ENCODE measurements at regions of chr7 and their contacts with region 1.

Region 1: DNA sequence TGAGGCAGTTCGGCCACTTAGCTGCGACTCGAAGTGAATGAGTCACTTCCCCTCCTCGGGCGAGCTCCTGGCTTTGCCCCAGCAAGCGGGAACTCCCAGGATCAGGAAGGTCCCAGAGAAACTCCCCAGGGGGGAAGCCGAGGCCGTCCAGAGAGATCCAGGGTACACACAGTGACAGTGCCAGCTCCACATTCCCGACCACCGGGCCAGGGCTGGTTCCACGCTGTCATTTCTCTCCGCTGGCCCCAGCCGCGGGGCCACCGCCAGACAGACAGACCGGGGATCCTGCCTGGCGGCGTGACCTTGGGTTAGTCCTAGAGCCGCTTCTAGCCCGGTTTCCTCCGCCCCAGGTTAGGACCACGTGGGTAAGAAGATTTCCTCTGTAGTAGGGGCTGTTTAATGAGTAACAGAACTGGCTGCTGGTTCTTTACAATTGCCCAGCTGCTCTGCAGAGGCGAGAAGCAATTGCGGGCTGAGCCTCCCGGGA is 463 bp upstream of the UPP1 start:
- DNase-seq: no peak
- ATAC-seq: no peak
- H3K4me3 ChIP-seq: peak overlapping the region; percentile 53 to 81 (median 73)
- H3K4me3 Mint-ChIP-seq: peak overlapping the region; percentile 94
- H3K27ac ChIP-seq: peak overlapping the region; percentile 56 to 73
- H3K27ac Mint-ChIP-seq: peak overlapping the region; percentile 82
- H3K4me1 ChIP-seq: peaks cover 15 to 40% of the 10 kb centered on the region in 2 donors
- H3K4me1 Mint-ChIP-seq: peaks cover 43% of the 10 kb centered on the region
- H3K27me3 ChIP-seq: no peaks in the 10 kb centered on the region
- H3K27me3 Mint-ChIP-seq: no peaks in the 10 kb centered on the region
- CTCF ChIP-seq: no peak

Region 2: GRCh38 chr7:47254081-47255006 is 834.3 kb before region 1 on chr7:
- CTCF ChIA-PET with region 1: no interaction called
- POLR2A ChIA-PET with region 1: no interaction called
- intact Hi-C with region 1: loop called (anchors 5 kb)
- DNase-seq: peak; percentile 81
- ATAC-seq: peak; percentile 85
- H3K4me3 ChIP-seq: peak overlapping the region; percentile 5 to 65 (median 48)
- H3K4me3 Mint-ChIP-seq: peak overlapping the region; percentile 88
- H3K27ac ChIP-seq: peak overlapping the region in 1 of 2 donors; percentile 45
- H3K27ac Mint-ChIP-seq: peak overlapping the region; percentile 73
- H3K4me1 ChIP-seq: peaks cover 16 to 24% of the 10 kb centered on the region in 2 donors
- H3K4me1 Mint-ChIP-seq: peaks cover 25% of the 10 kb centered on the region
- H3K27me3 ChIP-seq: no peaks in the 10 kb centered on the region
- H3K27me3 Mint-ChIP-seq: peaks cover 5% of the 10 kb centered on the region
- CTCF ChIP-seq: peak; percentile 87

Region 3: DNA sequence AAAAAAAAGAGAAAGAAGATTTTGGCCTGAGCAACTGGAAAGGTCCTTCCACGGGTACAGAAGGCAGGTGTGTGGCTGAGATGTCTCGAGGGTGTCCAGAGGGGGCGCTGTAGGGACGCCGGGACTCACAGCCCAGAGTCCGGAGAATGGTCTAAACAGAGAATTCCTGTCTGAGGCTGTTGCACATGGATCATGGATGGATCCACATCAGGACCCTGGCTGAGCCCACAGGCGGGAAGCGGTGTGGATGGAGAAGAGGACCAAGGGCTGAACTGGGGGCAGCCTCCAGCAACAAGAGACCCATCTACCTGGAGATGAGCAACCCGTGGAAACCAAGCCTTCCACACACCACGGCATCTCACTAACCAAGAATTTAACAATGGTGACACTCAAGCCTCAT is 195.4 kb before region 1 on chr7:
- CTCF ChIA-PET with region 1: no interaction called
- POLR2A ChIA-PET with region 1: no interaction called
- intact Hi-C with region 1: no loop called
- DNase-seq: no peak
- ATAC-seq: no peak
- H3K4me3 ChIP-seq: no peak overlapping the region
- H3K4me3 Mint-ChIP-seq: no peak overlapping the region
- H3K27ac ChIP-seq: no peak overlapping the region
- H3K27ac Mint-ChIP-seq: no peak overlapping the region
- H3K4me1 ChIP-seq: no peaks in the 10 kb centered on the region
- H3K4me1 Mint-ChIP-seq: no peaks in the 10 kb centered on the region
- H3K27me3 ChIP-seq: no peaks in the 10 kb centered on the region
- H3K27me3 Mint-ChIP-seq: peaks cover 4% of the 10 kb centered on the region
- CTCF ChIP-seq: no peak

Region 4: DNA sequence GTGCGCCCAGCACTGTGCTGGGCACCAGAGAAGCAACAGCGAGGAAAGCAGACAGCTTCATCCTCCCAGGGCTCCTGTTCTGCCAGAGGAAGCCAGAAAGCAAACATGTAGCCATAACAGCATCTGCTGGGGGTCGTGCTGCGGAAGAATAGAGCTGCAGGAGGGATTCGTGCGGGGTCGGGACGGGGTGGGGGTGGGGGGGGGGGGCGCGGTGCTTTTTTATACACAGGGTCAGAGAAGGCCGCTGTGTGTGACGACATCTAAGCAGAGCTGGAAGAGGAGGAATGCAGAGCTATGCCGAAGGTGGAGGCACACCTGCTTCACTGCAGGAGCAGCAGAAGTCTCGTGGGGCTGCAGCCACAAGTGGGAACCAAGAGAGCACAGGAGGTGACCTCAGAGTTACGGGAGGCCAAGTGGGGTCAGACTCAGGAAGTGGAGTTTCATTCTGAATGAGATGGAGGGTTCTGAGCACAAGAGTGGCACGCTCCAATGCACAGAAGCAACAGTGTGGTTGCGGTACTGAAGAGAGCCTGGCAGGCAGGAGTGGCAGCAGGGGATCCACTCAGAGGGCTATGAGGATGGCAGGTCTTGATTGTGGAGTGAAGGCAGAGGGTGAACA is 151.4 kb before region 1 on chr7:
- CTCF ChIA-PET with region 1: interaction called, 5 read pairs
- POLR2A ChIA-PET with region 1: no interaction called
- intact Hi-C with region 1: loop called (anchors 5 kb)
- DNase-seq: peak; percentile 81
- ATAC-seq: peak; percentile 91
- H3K4me3 ChIP-seq: peak overlapping the region in 3 of 5 experiments; percentile 10 to 20 (median 18)
- H3K4me3 Mint-ChIP-seq: peak overlapping the region; percentile 74
- H3K27ac ChIP-seq: no peak overlapping the region
- H3K27ac Mint-ChIP-seq: peak overlapping the region; percentile 64
- H3K4me1 ChIP-seq: peaks cover 29% of the 10 kb centered on the region in 2 donors
- H3K4me1 Mint-ChIP-seq: peaks cover 31% of the 10 kb centered on the region
- H3K27me3 ChIP-seq: no peaks in the 10 kb centered on the region
- H3K27me3 Mint-ChIP-seq: no peaks in the 10 kb centered on the region
- CTCF ChIP-seq: no peak

Region 5: DNA sequence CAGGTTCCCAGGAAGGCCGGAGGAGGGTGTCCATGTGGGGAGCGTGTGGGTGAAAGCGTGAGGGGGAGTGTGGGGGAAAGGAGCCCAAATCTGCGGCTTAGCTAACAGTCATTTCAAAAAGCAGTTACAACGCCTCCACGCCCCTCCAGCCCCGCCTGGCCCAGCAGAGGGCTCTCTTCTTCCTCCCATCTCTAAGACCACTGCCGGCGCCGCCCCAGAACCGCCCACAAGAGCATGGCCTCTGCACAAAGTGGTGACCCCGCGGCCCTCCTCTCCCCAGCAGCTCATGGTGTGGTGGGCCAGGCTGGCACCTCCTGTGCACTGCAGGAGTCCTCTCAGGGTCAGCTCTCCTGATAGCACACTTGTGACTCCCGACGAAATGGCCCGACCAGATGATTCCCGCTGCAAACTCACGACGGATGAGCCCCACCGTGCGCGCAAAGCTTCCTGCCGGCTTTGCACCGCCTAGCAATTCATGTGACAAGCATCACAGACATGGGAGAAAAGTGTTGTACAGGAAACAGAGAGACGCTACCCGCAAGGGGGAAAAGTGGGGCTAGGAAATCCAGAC is 96.8 kb before region 1 on chr7:
- CTCF ChIA-PET with region 1: interaction called, 14 read pairs
- POLR2A ChIA-PET with region 1: interaction called, 5 read pairs
- intact Hi-C with region 1: loop called (anchors 1 kb)
- DNase-seq: peak; percentile 89
- ATAC-seq: peak; percentile 99
- H3K4me3 ChIP-seq: peak overlapping the region; percentile 39 to 86 (median 69)
- H3K4me3 Mint-ChIP-seq: peak overlapping the region; percentile 96
- H3K27ac ChIP-seq: peak overlapping the region; percentile 60 to 82
- H3K27ac Mint-ChIP-seq: peak overlapping the region; percentile 88
- H3K4me1 ChIP-seq: peaks cover 9 to 12% of the 10 kb centered on the region in 2 donors
- H3K4me1 Mint-ChIP-seq: peaks cover 12% of the 10 kb centered on the region
- H3K27me3 ChIP-seq: no peaks in the 10 kb centered on the region
- H3K27me3 Mint-ChIP-seq: no peaks in the 10 kb centered on the region
- CTCF ChIP-seq: peak; percentile 71

Region 6: GRCh38 chr7:48109848-48110663 is 21.5 kb after region 1 on chr7:
- CTCF ChIA-PET with region 1: interaction called, 12 read pairs
- POLR2A ChIA-PET with region 1: interaction called, 3 read pairs
- intact Hi-C with region 1: loop called (anchors 2 kb)
- DNase-seq: peak; percentile 85
- ATAC-seq: peak; percentile 96
- H3K4me3 ChIP-seq: no peak overlapping the region
- H3K4me3 Mint-ChIP-seq: no peak overlapping the region
- H3K27ac ChIP-seq: no peak overlapping the region
- H3K27ac Mint-ChIP-seq: no peak overlapping the region
- H3K4me1 ChIP-seq: peaks cover 0 to 3% of the 10 kb centered on the region in 2 donors
- H3K4me1 Mint-ChIP-seq: peaks cover 4% of the 10 kb centered on the region
- H3K27me3 ChIP-seq: no peaks in the 10 kb centered on the region
- H3K27me3 Mint-ChIP-seq: peaks cover 3% of the 10 kb centered on the region
- CTCF ChIP-seq: peak; percentile 97

Region 7: GRCh38 chr7:48126037-48126436 is 37.4 kb after region 1 on chr7:
- CTCF ChIA-PET with region 1: no interaction called
- POLR2A ChIA-PET with region 1: no interaction called
- intact Hi-C with region 1: no loop called
- DNase-seq: no peak
- ATAC-seq: no peak
- H3K4me3 ChIP-seq: no peak overlapping the region
- H3K4me3 Mint-ChIP-seq: no peak overlapping the region
- H3K27ac ChIP-seq: no peak overlapping the region
- H3K27ac Mint-ChIP-seq: no peak overlapping the region
- H3K4me1 ChIP-seq: no peaks in the 10 kb centered on the region
- H3K4me1 Mint-ChIP-seq: no peaks in the 10 kb centered on the region
- H3K27me3 ChIP-seq: peaks cover 0 to 10% (median 2%) of the 10 kb centered on the region in 4 experiments
- H3K27me3 Mint-ChIP-seq: peaks cover 41% of the 10 kb centered on the region
- CTCF ChIP-seq: peak; percentile 39